CD14-positive monocyte (primary cell): ENCODE measurements at regions of chr9 and their contacts with region 1.

Region 1: GRCh38 chr9:87497604-87498045 is at the start of gene DAPK1:
- DNase-seq: peak; percentile 65 to 75 (median 67)
- H3K4me3 ChIP-seq: peak within 1 kb of the TSS; percentile 73 to 91 (median 84)
- H3K4me3 Mint-ChIP-seq: peak within 1 kb of the TSS; percentile 97 to 100
- H3K27ac ChIP-seq: peak within 1 kb of the TSS; percentile 69 to 90
- H3K27ac Mint-ChIP-seq: peak within 1 kb of the TSS; percentile 90 to 96 (median 91)
- H3K4me1 ChIP-seq: peaks cover 59 to 75% of the 10 kb centered on the region in 2 donors
- H3K4me1 Mint-ChIP-seq: peaks cover 73% of the 10 kb centered on the region
- H3K27me3 ChIP-seq: no peaks in the 10 kb centered on the region
- H3K27me3 Mint-ChIP-seq: peaks cover 5 to 6% (median 6%) of the 10 kb centered on the region in 3 donors
- CTCF ChIP-seq: peak; percentile 17
- polyA plus RNA-seq, gene DAPK1: 24.1 to 102 (median 44.4) TPM

Region 2: GRCh38 chr9:86749894-86750255 is 747.8 kb before region 1 on chr9:
- intact Hi-C with region 1: no loop called
- DNase-seq: no peak
- H3K4me3 ChIP-seq: no peak overlapping the region
- H3K4me3 Mint-ChIP-seq: no peak overlapping the region
- H3K27ac ChIP-seq: no peak overlapping the region
- H3K27ac Mint-ChIP-seq: no peak overlapping the region
- H3K4me1 ChIP-seq: no peaks in the 10 kb centered on the region
- H3K4me1 Mint-ChIP-seq: no peaks in the 10 kb centered on the region
- H3K27me3 ChIP-seq: peaks cover 0 to 3% of the 10 kb centered on the region in 2 donors
- H3K27me3 Mint-ChIP-seq: peaks cover 4 to 16% (median 8%) of the 10 kb centered on the region in 3 donors
- CTCF ChIP-seq: no peak

Region 3: GRCh38 chr9:87336914-87337333 is 160.7 kb before region 1 on chr9:
- intact Hi-C with region 1: loop called in 1 of 2 experiments (anchors 10 kb)
- DNase-seq: peak; percentile 50 to 70 (median 65)
- H3K4me3 ChIP-seq: peak overlapping the region in 1 of 3 experiments; percentile 21
- H3K4me3 Mint-ChIP-seq: peak overlapping the region; percentile 54 to 91
- H3K27ac ChIP-seq: no peak overlapping the region
- H3K27ac Mint-ChIP-seq: no peak overlapping the region
- H3K4me1 ChIP-seq: peaks cover 6 to 7% of the 10 kb centered on the region in 2 donors
- H3K4me1 Mint-ChIP-seq: peaks cover 12% of the 10 kb centered on the region
- H3K27me3 ChIP-seq: peaks cover 18 to 21% of the 10 kb centered on the region in 2 donors
- H3K27me3 Mint-ChIP-seq: peaks cover 19 to 30% (median 30%) of the 10 kb centered on the region in 3 donors
- CTCF ChIP-seq: peak; percentile 86

Region 4: DNA sequence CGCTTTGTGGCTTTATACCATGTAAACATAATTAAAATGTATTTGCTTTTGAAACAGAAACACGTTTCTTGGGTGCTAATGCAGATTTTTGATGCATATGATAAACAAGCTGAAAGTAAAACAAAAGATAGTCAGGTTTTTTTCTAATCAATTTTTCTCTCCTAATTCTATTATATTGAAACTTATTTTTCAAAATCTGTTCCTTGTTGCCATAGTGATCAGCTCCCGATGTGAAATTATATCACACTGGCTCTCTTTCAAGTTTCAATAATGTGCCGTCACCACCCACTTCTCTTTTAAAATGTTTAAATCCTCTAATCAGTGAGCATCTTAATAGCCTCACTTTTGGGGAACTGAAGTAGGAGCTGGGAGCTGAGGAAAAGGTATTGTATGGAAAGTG is 36.4 kb before region 1 on chr9:
- intact Hi-C with region 1: no loop called
- DNase-seq: no peak
- H3K4me3 ChIP-seq: no peak overlapping the region
- H3K4me3 Mint-ChIP-seq: no peak overlapping the region
- H3K27ac ChIP-seq: no peak overlapping the region
- H3K27ac Mint-ChIP-seq: no peak overlapping the region
- H3K4me1 ChIP-seq: peaks cover 0 to 12% of the 10 kb centered on the region in 2 donors
- H3K4me1 Mint-ChIP-seq: peaks cover 8% of the 10 kb centered on the region
- H3K27me3 ChIP-seq: no peaks in the 10 kb centered on the region
- H3K27me3 Mint-ChIP-seq: peaks cover 2 to 4% (median 3%) of the 10 kb centered on the region in 3 donors
- CTCF ChIP-seq: no peak

Region 5: DNA sequence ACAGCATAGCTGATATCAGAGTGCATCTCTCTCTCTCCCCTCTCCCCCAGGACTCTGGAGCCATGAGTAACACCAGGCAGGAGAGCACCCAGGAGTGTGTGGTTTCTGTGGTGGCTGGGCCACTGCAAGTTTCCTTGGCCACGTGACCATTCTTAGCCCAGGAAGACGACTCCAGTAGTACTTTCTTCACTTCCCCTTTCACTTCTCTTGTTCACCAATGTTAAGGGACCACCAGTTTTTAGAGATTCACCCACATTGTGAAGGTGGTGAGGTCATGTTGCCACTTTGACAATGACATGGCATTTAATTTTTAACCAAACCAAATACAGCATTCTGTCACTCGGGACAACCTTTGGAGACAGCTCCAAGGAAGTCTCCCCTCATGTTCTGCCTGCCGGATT is 17.8 kb before region 1 on chr9:
- intact Hi-C with region 1: loop called in 1 of 2 experiments (anchors 2 kb)
- DNase-seq: peak; percentile 94 to 99 (median 98)
- H3K4me3 ChIP-seq: peak overlapping the region in 2 of 3 experiments; percentile 12 to 51
- H3K4me3 Mint-ChIP-seq: peak overlapping the region in 1 of 2 donors; percentile 51
- H3K27ac ChIP-seq: peak overlapping the region; percentile 43 to 81
- H3K27ac Mint-ChIP-seq: peak overlapping the region; percentile 87 to 95 (median 92)
- H3K4me1 ChIP-seq: peaks cover 32 to 37% of the 10 kb centered on the region in 2 donors
- H3K4me1 Mint-ChIP-seq: peaks cover 29% of the 10 kb centered on the region
- H3K27me3 ChIP-seq: no peaks in the 10 kb centered on the region
- H3K27me3 Mint-ChIP-seq: no peaks in the 10 kb centered on the region
- CTCF ChIP-seq: no peak

Region 6: DNA sequence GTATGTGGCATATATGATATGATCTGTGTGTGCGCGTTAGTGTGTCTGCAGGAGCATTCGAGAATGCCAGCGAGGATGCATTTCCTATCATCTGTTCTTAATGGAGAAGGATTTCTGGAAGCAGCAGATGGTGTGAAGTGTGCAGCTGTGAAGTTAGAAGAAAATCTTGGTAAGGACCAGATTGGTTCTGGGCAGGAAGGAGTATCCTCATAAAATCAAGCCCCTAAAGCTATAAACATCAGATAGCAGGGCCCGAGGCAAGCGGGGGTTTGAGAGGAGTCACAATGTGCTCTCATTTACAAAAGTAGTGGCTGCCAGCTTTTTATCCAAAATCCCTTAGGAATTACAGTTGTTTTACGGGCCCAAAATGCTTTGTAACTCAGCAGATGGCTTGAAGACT is 40.0 kb after region 1 on chr9:
- intact Hi-C with region 1: no loop called
- DNase-seq: no peak
- H3K4me3 ChIP-seq: no peak overlapping the region
- H3K4me3 Mint-ChIP-seq: no peak overlapping the region
- H3K27ac ChIP-seq: no peak overlapping the region
- H3K27ac Mint-ChIP-seq: no peak overlapping the region
- H3K4me1 ChIP-seq: no peaks in the 10 kb centered on the region
- H3K4me1 Mint-ChIP-seq: peaks cover 8% of the 10 kb centered on the region
- H3K27me3 ChIP-seq: no peaks in the 10 kb centered on the region
- H3K27me3 Mint-ChIP-seq: no peaks in the 10 kb centered on the region
- CTCF ChIP-seq: no peak

Region 7: GRCh38 chr9:87613265-87614111 is 115.9 kb after region 1 on chr9:
- intact Hi-C with region 1: loop called in 1 of 2 experiments (anchors 5 kb)
- DNase-seq: peak; percentile 54 to 60 (median 59)
- H3K4me3 ChIP-seq: peak overlapping the region in 1 of 3 experiments; percentile 37
- H3K4me3 Mint-ChIP-seq: peak overlapping the region in 1 of 2 donors; percentile 69
- H3K27ac ChIP-seq: peak overlapping the region; percentile 57 to 93
- H3K27ac Mint-ChIP-seq: peak overlapping the region; percentile 90 to 97 (median 93)
- H3K4me1 ChIP-seq: peaks cover 57 to 82% of the 10 kb centered on the region in 2 donors
- H3K4me1 Mint-ChIP-seq: peaks cover 88% of the 10 kb centered on the region
- H3K27me3 ChIP-seq: no peaks in the 10 kb centered on the region
- H3K27me3 Mint-ChIP-seq: peaks cover 0 to 3% (median 1%) of the 10 kb centered on the region in 3 donors
- CTCF ChIP-seq: no peak

Region 8: GRCh38 chr9:87792831-87793288 is 295.2 kb after region 1 on chr9:
- intact Hi-C with region 1: loop called in 1 of 2 experiments (anchors 10 kb)
- DNase-seq: peak; percentile 99 to 100 (median 100)
- H3K4me3 ChIP-seq: peak overlapping the region; percentile 21 to 67 (median 33)
- H3K4me3 Mint-ChIP-seq: peak overlapping the region in 1 of 2 donors; percentile 69
- H3K27ac ChIP-seq: peak overlapping the region; percentile 92 to 100
- H3K27ac Mint-ChIP-seq: peak overlapping the region; percentile 95 to 99 (median 98)
- H3K4me1 ChIP-seq: peaks cover 55 to 65% of the 10 kb centered on the region in 2 donors
- H3K4me1 Mint-ChIP-seq: peaks cover 68% of the 10 kb centered on the region
- H3K27me3 ChIP-seq: no peaks in the 10 kb centered on the region
- H3K27me3 Mint-ChIP-seq: peaks cover 0 to 3% (median 0%) of the 10 kb centered on the region in 3 donors
- CTCF ChIP-seq: peak; percentile 31